Heart right ventricle (tissue), 16 donors: ENCODE measurements at regions of chr10 and their contacts with region 1.

Region 1: GRCh38 chr10:2525781-2526180 is 541.6 kb upstream of the PFKP start:
- DNase-seq: no peak
- ATAC-seq: no peak
- H3K4me3 ChIP-seq: no peak overlapping the region
- H3K27ac ChIP-seq: no peak overlapping the region
- H3K4me1 ChIP-seq: no peaks in the 10 kb centered on the region
- H3K27me3 ChIP-seq: peaks cover 0 to 4% (median 0%) of the 10 kb centered on the region in 7 donors
- CTCF ChIP-seq: no peak

Region 2: DNA sequence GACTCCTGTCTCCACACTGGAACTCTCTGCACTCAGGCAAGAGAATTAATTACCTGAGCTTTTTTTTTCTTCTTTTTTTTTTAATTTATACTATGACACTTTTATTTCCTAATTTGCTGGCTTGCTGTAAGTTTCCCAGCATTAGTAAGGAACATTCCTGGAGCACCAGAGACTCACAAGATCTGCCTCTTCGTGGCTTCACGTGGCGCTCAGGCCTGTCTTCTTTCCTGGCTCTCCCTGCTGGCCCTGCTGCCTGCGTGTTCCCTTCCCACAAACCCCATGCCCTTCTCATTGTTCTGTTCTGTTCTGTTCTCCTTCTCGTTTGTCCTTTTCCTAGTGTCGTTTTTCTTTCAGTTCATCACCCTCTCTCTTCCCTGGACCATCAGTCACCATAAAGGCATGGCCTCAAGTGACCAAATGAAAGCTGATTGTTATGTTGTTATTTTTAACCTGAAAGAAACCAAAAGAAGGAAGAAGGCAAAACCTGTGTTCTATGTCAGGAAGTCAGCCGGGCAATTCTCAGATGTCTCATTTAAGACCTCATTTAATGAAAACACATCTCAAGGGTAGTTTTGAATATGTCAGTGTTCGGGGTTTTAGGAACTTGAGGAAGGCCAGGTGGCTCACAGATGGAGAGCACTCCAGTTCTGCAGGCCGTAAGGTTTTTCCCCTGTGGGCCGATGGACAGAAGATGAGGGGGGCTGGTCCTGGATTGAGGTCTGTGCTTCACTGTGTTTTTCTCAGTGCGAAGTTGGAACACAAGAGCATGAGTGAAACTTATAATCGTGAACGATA is 49.9 kb before region 1 on chr10:
- intact Hi-C with region 1: loop called in 1 of 10 experiments (anchors 1 kb)
- DNase-seq: no peak
- ATAC-seq: no peak
- H3K4me3 ChIP-seq: no peak overlapping the region
- H3K27ac ChIP-seq: no peak overlapping the region
- H3K4me1 ChIP-seq: no peaks in the 10 kb centered on the region
- H3K27me3 ChIP-seq: no peaks in the 10 kb centered on the region
- CTCF ChIP-seq: no peak

Region 3: GRCh38 chr10:2488436-2489012 is 37.3 kb before region 1 on chr10:
- intact Hi-C with region 1: no loop called
- DNase-seq: no peak
- ATAC-seq: no peak
- H3K4me3 ChIP-seq: no peak overlapping the region
- H3K27ac ChIP-seq: no peak overlapping the region
- H3K4me1 ChIP-seq: no peaks in the 10 kb centered on the region
- H3K27me3 ChIP-seq: peaks cover 0 to 2% (median 0%) of the 10 kb centered on the region in 7 donors
- CTCF ChIP-seq: no peak

Region 4: DNA sequence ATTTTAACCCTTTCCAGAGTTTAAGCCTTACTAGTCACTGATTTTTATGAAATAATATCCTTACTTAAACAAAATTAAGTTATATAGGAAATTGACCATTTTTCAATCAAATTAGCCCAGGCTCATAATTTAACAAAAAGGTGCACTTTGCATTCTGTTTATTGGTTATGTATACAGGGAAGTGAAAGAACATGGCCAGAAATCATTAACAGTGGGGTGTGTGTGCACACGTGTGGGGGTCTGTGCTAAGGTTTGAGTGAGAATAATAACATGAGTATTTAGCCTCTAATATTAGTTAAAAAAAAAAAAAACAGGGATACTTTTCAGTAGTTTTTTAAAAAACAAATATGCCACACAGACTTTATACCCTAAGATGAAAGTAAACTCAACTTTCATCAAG is 31.1 kb after region 1 on chr10:
- intact Hi-C with region 1: no loop called
- DNase-seq: no peak
- ATAC-seq: no peak
- H3K4me3 ChIP-seq: no peak overlapping the region
- H3K27ac ChIP-seq: no peak overlapping the region
- H3K4me1 ChIP-seq: no peaks in the 10 kb centered on the region
- H3K27me3 ChIP-seq: peaks cover 0 to 6% (median 0%) of the 10 kb centered on the region in 7 donors
- CTCF ChIP-seq: no peak